Natural killer cell (primary cell): ENCODE measurements at regions of chr14 and their contacts with region 1.

Region 1: DNA sequence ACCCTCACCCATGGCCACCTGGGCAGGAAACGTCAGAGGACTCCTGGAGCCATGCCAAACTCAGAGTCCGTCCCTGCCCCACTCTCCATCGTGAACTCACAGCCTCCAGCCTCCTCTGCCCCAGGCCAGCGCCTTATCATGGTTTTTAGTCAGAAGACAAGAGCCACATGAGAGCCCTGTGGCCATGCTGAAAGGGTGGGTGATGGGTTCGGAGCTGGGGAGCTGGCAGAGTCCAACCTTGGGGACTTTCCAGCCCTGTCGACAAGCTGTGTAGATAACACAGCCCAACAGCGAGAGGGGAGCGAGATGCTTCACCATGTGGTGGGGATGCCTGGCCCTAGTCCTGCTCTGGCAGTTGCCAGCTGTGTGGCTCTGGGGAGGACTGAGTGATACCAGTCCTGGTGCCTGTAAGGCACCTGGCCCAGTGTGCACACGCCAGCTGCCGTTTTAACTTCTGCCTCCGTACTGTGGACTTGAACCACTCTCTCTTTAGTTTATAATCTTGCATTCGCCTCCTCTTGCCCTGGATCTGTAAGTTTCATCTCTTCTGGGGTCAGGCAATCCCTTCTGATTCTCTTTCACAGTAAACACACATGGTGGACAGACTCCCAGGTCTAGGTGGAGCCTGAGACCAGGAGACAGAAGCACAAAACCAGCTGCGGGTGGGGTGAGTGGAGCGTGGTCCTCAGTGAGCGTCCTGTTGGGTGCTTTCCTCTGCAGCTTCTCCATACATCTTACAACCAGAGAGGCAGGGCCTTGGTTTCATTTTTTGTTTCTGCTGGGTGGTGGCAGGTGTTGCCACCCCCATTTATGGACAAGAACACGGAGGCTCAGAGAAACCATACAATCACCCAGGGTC is 55.3 kb downstream of the RIN3 start:
- DNase-seq: peak; percentile 69 to 82
- ATAC-seq: peak; percentile 83 to 94 (median 88)
- H3K4me3 ChIP-seq: no peak overlapping the region
- H3K4me3 Mint-ChIP-seq: peak overlapping the region; percentile 83
- H3K27ac ChIP-seq: peak overlapping the region; percentile 89
- H3K27ac Mint-ChIP-seq: peak overlapping the region; percentile 98
- H3K4me1 ChIP-seq: peaks cover 82% of the 10 kb centered on the region
- H3K4me1 Mint-ChIP-seq: peaks cover 65 to 76% of the 10 kb centered on the region in 2 donors
- H3K27me3 ChIP-seq: no peaks in the 10 kb centered on the region
- H3K27me3 Mint-ChIP-seq: no peaks in the 10 kb centered on the region
- CTCF ChIP-seq: no peak

Region 2: DNA sequence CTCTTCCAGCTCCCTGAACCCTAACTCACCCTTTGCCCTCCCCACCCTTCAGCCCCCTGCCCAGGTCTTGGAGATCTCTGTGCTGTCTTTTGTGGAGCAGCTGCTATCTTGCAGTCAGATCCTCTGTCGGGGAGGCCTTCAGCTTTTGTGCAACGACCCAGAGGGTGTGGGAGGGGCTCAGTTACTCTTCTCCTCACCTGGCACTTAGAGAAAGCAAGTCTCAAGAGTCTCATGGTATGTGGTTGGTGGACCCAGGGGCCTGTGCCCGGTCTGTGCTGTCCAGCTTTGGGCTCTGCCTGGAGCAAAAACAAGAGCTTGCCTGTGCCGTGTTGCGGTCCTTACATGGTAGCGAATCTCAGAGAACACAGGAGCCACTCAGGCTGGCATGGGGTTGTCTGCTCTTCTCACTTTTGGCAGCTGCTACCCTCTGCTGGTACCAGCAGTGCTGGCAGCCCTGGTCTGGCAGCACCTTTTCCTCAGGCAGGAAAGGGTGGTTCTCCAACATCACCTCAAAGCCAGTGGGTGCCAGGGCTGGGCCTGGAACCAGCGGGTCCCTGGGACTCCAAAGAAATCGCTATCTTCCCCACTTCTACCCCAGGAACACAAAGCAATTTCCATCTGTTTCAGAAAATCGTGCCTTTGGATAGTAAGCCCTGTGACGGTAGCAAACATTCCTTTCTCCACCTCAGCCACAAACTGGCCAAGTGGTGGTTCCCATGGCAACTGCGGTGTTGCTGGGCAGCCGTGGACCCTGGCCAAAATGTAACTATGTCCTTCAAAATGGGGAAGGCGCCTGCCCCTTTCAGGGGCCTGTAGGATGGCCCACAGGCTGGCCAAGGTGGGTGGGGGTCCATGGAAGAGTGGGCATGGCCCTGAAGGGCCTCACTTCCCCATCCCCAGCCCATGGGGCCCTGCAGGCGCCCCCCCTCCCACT is 34.7 kb after region 1 on chr14:
- intact Hi-C with region 1: loop called (anchors 1 kb)
- DNase-seq: peak; percentile 49 to 83
- ATAC-seq: peak; percentile 69 to 76 (median 70)
- H3K4me3 ChIP-seq: no peak overlapping the region
- H3K4me3 Mint-ChIP-seq: peak overlapping the region; percentile 40
- H3K27ac ChIP-seq: peak overlapping the region; percentile 1
- H3K27ac Mint-ChIP-seq: peak overlapping the region; percentile 62 to 66
- H3K4me1 ChIP-seq: peaks cover 55% of the 10 kb centered on the region
- H3K4me1 Mint-ChIP-seq: peaks cover 43 to 67% of the 10 kb centered on the region in 2 donors
- H3K27me3 ChIP-seq: no peaks in the 10 kb centered on the region
- H3K27me3 Mint-ChIP-seq: no peaks in the 10 kb centered on the region
- CTCF ChIP-seq: peak; percentile 42